HCT116 (cell line): ENCODE measurements at regions of chr2 and their contacts with region 1.

Region 1: DNA sequence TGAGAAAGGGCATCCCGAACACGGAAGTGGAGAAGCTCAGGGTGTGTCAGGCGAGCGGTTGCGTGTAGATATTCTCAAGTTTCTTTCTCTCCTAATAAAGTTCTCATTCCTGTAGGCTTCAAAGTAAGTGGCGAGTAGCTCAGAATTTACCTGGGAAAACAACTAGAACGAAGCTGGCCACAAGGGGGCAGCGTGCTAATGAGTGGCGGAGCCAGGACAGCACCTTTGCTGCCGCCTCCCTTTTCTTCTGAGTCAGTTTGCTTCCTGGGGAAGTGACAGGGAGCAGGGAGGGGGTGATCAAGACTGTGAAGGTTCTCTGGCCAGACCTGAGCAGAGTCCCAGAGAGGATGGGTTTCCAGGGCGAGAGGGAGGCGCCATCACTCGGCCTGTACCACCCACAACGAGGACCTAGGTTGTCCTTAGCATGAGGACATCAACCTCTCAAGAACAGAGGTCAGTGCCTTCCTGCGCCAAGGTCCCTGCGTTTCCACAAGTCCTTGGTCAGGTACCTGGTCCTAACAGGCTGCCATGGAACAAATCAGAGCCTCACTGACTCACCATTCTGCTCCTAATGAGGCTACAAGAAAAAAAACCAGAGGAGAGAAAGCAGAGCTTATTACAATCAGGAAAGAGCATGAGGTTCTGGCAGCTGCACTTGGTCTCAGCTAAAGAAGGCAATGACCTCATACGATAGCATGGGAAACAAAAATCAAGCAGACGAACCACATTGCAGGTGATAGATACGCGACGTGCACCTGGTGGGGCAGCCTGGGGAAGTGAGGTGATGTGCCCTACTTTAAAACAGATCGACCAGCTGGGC is 98.6 kb downstream of the PLB1 start:
- DNase-seq: peak; percentile 88
- ATAC-seq: peak; percentile 80
- H3K4me3 ChIP-seq: peak overlapping the region in 1 of 2 experiments; percentile 21; a peak in 2 of 4 replicates
- H3K27ac ChIP-seq: peak overlapping the region; percentile 6; the same call in 1 of the 2 replicates
- H3K4me1 ChIP-seq: peaks cover 20 to 50% of the 10 kb centered on the region in 2 experiments
- H3K27me3 ChIP-seq: no peaks in the 10 kb centered on the region
- CTCF ChIP-seq: peak; percentile 79 to 95 (median 86)
- POLR2A ChIP-seq: no peak
- RAD21 ChIP-seq: peak; percentile 96

Region 2: DNA sequence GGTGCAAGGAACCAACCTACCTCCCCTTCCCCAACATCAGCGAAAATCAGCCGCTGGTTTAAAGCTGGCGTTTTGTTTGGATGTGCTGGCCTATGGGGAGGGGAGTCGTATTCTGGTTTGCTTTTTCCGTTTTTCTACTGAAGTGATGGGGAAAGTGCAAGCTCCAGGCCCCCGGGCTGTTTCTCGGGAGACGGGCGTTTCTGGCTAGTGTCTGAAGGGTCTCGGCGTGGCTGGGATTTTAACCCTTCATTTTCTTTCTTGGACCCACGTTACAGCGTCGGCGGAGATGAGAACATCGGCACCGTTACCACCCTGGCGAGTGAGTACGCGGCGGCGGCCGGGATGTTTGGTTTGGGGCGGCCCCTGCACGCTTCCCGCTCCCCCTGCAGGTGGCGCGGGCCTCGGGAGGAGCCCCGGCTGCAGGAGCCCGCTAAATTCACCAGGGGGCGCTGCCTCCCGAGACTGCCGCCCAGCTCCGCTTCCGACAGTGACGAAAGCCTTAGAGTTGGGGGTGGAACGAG is 27.9 kb before region 1 on chr2:
- CTCF ChIA-PET with region 1: interaction called, 18 read pairs
- POLR2A ChIA-PET with region 1: interaction called, 4 read pairs
- RAD21 ChIA-PET with region 1: interaction called, 6 to 12 read pairs
- intact Hi-C with region 1: loop called (anchors 2 kb)
- DNase-seq: peak; percentile 60
- ATAC-seq: peak; percentile 94
- H3K4me3 ChIP-seq: peak overlapping the region; percentile 46 to 64
- H3K27ac ChIP-seq: no peak overlapping the region
- H3K4me1 ChIP-seq: peaks cover 0 to 11% of the 10 kb centered on the region in 2 experiments; a peak in 3 of 4 replicates
- H3K27me3 ChIP-seq: no peaks in the 10 kb centered on the region
- CTCF ChIP-seq: peak; percentile 97 to 99 (median 98)
- POLR2A ChIP-seq: no peak
- RAD21 ChIP-seq: peak; percentile 95

Region 3: GRCh38 chr2:28577791-28578680 is 16.5 kb before region 1 on chr2:
- CTCF ChIA-PET with region 1: interaction called, 33 read pairs
- POLR2A ChIA-PET with region 1: no interaction called
- RAD21 ChIA-PET with region 1: no interaction called
- intact Hi-C with region 1: no loop called
- DNase-seq: no peak
- ATAC-seq: no peak
- H3K4me3 ChIP-seq: no peak overlapping the region
- H3K27ac ChIP-seq: no peak overlapping the region
- H3K4me1 ChIP-seq: peaks cover 0 to 14% of the 10 kb centered on the region in 2 experiments; a peak in 2 of 4 replicates
- H3K27me3 ChIP-seq: no peaks in the 10 kb centered on the region
- CTCF ChIP-seq: no peak
- POLR2A ChIP-seq: no peak
- RAD21 ChIP-seq: no peak

Region 4: DNA sequence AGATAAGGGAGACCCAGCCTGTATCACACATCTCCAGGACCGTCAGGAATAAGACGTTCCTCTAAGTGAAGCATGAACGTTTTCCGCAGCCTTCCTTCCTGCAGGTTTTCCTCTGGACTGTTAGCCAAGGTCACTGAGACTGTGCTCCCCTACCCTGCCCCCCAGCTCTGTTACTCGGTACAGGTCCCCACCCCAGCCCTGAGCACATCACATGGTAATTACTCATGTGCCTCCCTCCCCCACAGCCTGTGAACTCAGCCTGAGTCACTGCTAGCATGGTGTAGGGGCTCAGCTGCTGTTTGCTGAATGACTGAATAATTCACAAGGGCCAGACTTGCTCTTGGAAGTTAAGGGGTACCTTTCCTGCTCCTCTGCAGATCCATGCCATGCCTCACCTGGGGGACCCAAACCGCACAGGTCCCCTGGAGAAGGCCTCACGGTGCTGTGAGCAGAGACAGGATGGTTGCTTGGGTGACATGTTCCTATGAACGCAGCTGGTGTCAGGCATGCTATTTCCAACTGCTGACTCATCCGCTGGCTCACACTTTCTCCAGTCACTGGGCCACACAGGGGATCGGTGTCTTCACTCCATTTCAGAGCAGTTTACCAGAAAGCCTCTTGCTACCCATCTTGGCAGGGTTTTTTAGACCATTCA is 10.5 kb before region 1 on chr2:
- CTCF ChIA-PET with region 1: interaction called, 33 read pairs
- POLR2A ChIA-PET with region 1: interaction called, 8 read pairs
- RAD21 ChIA-PET with region 1: no interaction called
- intact Hi-C with region 1: no loop called
- DNase-seq: peak; percentile 80
- ATAC-seq: peak; percentile 89
- H3K4me3 ChIP-seq: peak overlapping the region; percentile 21 to 49
- H3K27ac ChIP-seq: peak overlapping the region; percentile 63
- H3K4me1 ChIP-seq: peaks cover 17 to 51% of the 10 kb centered on the region in 2 experiments
- H3K27me3 ChIP-seq: no peaks in the 10 kb centered on the region
- CTCF ChIP-seq: no peak
- POLR2A ChIP-seq: no peak
- RAD21 ChIP-seq: 0 out of 2 replicates have a peak, but pooled peaks have one; percentile 17

Region 5: GRCh38 chr2:28621172-28622100 is 26.9 kb after region 1 on chr2:
- CTCF ChIA-PET with region 1: interaction called, 12 read pairs
- POLR2A ChIA-PET with region 1: no interaction called
- RAD21 ChIA-PET with region 1: interaction called in 1 of 2 experiments, 3 read pairs
- intact Hi-C with region 1: no loop called
- DNase-seq: peak; percentile 58
- ATAC-seq: peak; percentile 97
- H3K4me3 ChIP-seq: peak overlapping the region in 1 of 2 experiments; percentile 14; a peak in 1 of 4 replicates
- H3K27ac ChIP-seq: peak overlapping the region; percentile 6; the same call in 1 of the 2 replicates
- H3K4me1 ChIP-seq: peaks cover 7 to 31% of the 10 kb centered on the region in 2 experiments; a peak in 3 of 4 replicates
- H3K27me3 ChIP-seq: no peaks in the 10 kb centered on the region
- CTCF ChIP-seq: peak; percentile 66 to 94 (median 79)
- POLR2A ChIP-seq: no peak
- RAD21 ChIP-seq: peak; percentile 89

Region 6: DNA sequence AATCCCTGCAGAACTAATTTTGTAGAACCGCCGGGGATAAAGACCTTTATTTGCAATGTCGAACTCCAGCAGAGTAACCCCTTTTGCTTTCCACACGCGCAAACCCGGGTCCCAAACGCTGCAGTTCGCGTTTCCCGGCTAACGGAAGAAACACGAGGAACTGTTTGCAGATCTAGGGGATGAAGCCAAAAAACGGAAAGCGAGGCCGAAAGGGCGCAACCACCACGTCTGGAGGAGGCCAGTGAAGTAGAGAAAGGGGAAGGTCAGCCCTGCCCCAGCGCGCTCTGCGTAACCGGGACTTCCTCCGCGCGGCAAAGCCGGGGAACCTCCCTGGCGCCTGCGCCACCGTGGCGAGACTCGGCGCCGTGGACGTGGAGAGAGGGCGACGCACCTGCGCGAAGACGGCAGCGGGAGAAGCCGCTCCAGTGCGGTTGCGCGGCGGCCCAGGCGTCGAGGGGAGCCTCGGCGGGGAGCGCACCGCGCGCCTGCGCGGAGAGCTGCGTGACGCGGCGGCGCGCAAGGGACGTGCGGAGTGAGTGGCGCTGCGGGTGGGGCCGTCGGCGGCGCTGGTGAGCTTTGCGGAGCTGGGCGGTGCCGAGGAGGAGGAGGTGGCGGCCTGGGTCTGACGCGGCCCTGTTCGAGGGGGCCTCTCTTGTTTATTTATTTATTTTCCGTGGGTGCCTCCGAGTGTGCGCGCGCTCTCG is 156.9 kb after region 1 on chr2 and contains the start of gene PPP1CB:
- CTCF ChIA-PET with region 1: interaction called, 29 read pairs
- POLR2A ChIA-PET with region 1: interaction called, 11 read pairs
- RAD21 ChIA-PET with region 1: interaction called, 5 to 9 read pairs
- intact Hi-C with region 1: loop called (anchors 1 kb)
- DNase-seq: peak; percentile 88
- ATAC-seq: peak; percentile 89
- H3K4me3 ChIP-seq: peak within 1 kb of the TSS; percentile 76 to 77
- H3K27ac ChIP-seq: peak within 1 kb of the TSS; percentile 95
- H3K4me1 ChIP-seq: peaks cover 3 to 19% of the 10 kb centered on the region in 2 experiments; a peak in 2 of 4 replicates
- H3K27me3 ChIP-seq: no peaks in the 10 kb centered on the region
- CTCF ChIP-seq: no peak; a peak in 1 of 6 replicates
- POLR2A ChIP-seq: peak; percentile 89
- RAD21 ChIP-seq: no peak; the same call in 1 of the 2 replicates
- total RNA-seq, gene PPP1CB: 174 TPM

Region 7: GRCh38 chr2:28894470-28895177 is 300.1 kb after region 1 on chr2 and contains the start of gene WDR43:
- CTCF ChIA-PET with region 1: no interaction called
- POLR2A ChIA-PET with region 1: no interaction called
- RAD21 ChIA-PET with region 1: no interaction called
- intact Hi-C with region 1: loop called (anchors 10 kb)
- DNase-seq: peak; percentile 98
- ATAC-seq: peak; percentile 90
- H3K4me3 ChIP-seq: peak within 1 kb of the TSS; percentile 67 to 98
- H3K27ac ChIP-seq: peak within 1 kb of the TSS; percentile 93
- H3K4me1 ChIP-seq: peaks cover 15 to 29% of the 10 kb centered on the region in 2 experiments
- H3K27me3 ChIP-seq: peaks cover 9% of the 10 kb centered on the region; the same call in 1 of the 2 replicates
- CTCF ChIP-seq: no peak
- POLR2A ChIP-seq: peak; percentile 73
- RAD21 ChIP-seq: no peak
- total RNA-seq, gene WDR43: 119 TPM